Activated CD4-positive, alpha-beta T cell treated with anti-CD3 and anti-CD28 coated beads, Interleukin-2, amount 10 ng/mL, durations not matched to agents 7 days and 5 days (primary cell): ENCODE measurements at regions of chr2 and their contacts with region 1.

Region 1: GRCh38 chr2:37389989-37390765 is 45.7 kb downstream of the QPCT start:
- DNase-seq: peak; percentile 65
- H3K4me3 Mint-ChIP-seq: no peak overlapping the region
- H3K27ac Mint-ChIP-seq: peak overlapping the region; percentile 64
- H3K4me1 Mint-ChIP-seq: peaks cover 4% of the 10 kb centered on the region
- H3K27me3 Mint-ChIP-seq: peaks cover 23% of the 10 kb centered on the region

Region 2: GRCh38 chr2:37376421-37377186 is 13.6 kb before region 1 on chr2:
- CTCF ChIA-PET with region 1: interaction called, 11 read pairs
- POLR2A ChIA-PET with region 1: interaction called, 4 read pairs
- DNase-seq: peak; percentile 68
- H3K4me3 Mint-ChIP-seq: peak overlapping the region; percentile 13
- H3K27ac Mint-ChIP-seq: peak overlapping the region; percentile 64
- H3K4me1 Mint-ChIP-seq: peaks cover 30% of the 10 kb centered on the region
- H3K27me3 Mint-ChIP-seq: peaks cover 67% of the 10 kb centered on the region

Region 3: DNA sequence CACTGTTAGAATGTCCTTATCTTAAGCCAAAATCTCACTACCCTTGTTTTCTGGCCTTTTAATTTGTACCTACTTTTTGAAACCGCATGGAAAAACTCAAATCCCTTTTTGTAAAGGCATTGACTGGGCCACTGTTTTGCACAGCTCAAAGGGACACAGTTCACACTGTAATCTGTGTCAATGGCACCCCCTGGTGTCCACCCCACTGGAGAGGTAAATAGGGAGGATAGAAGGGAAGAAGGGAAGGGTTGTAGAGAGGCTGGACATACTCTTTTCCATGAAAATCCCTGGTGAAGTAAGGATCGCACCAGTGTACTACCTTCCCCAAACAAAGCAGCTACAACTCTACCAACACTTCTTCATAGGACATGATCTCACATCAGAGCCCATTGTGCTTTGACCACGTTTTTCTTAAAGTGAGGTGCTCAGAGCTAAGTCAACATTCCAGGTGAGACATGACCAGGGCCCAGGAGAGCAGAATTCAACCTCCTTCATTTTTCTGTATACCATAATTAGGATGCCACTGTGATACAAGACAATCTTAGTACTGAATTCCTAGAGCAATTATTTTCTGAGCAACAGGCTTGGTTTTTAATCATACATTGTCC is 442.5 kb after region 1 on chr2:
- CTCF ChIA-PET with region 1: interaction called, 19 read pairs
- POLR2A ChIA-PET with region 1: no interaction called
- DNase-seq: peak; percentile 85
- H3K4me3 Mint-ChIP-seq: no peak overlapping the region
- H3K27ac Mint-ChIP-seq: no peak overlapping the region
- H3K4me1 Mint-ChIP-seq: peaks cover 14% of the 10 kb centered on the region
- H3K27me3 Mint-ChIP-seq: no peaks in the 10 kb centered on the region

Region 4: GRCh38 chr2:37877457-37878315 is 487.5 kb after region 1 on chr2:
- CTCF ChIA-PET with region 1: interaction called, 10 read pairs
- POLR2A ChIA-PET with region 1: no interaction called
- DNase-seq: peak; percentile 61
- H3K4me3 Mint-ChIP-seq: no peak overlapping the region
- H3K27ac Mint-ChIP-seq: no peak overlapping the region
- H3K4me1 Mint-ChIP-seq: peaks cover 7% of the 10 kb centered on the region
- H3K27me3 Mint-ChIP-seq: peaks cover 17% of the 10 kb centered on the region